T-cell (primary cell): ENCODE measurements at regions of chr11 and their contacts with region 1.

Region 1: DNA sequence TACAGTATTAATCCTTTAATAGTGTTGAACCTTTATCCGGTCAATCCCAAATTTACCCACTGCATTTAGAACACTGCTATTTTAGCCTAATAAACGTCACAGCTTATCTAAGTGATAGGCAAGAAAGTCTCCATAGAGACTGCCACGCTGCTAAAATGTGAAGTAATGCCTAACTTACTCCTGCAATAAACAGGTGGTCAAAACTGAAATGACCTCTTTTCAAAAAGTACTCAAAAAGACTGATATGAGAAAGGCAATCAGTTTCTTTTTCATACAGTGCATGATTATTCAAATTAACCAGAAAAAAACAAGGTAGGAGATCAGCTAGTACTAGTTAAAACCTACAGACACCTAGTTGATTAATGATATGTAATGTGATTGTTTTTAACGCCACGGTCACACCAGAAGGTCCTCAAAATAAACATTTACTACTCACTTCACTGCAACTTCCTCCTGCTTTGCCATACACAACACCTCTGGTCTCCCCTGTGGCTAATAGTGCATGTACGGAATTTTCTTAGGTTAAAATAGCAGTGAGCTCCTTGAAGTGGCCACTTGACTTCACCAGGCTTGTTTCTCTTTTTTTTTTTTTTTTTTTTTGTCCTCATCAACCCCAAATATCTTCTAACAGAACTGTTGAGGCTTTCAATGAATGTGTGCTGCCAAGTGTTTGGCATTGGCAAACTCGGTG is 8.8 kb downstream of the ATP5MG start:
- DNase-seq: no peak
- ATAC-seq: no peak
- H3K4me3 ChIP-seq: no peak overlapping the region
- H3K4me3 Mint-ChIP-seq: no peak overlapping the region
- H3K27ac ChIP-seq: no peak overlapping the region
- H3K27ac Mint-ChIP-seq: peak overlapping the region in 1 of 2 donors; percentile 44
- H3K4me1 ChIP-seq: peaks cover 0 to 3% of the 10 kb centered on the region in 2 experiments
- H3K4me1 Mint-ChIP-seq: peaks cover 22 to 34% (median 30%) of the 10 kb centered on the region in 3 donors
- H3K27me3 ChIP-seq: no peaks in the 10 kb centered on the region
- H3K27me3 Mint-ChIP-seq: no peaks in the 10 kb centered on the region

Region 2: GRCh38 chr11:118304568-118305248 is 105.5 kb before region 1 on chr11 and contains the start of gene CD3E:
- CTCF ChIA-PET with region 1: no interaction called
- POLR2A ChIA-PET with region 1: no interaction called
- DNase-seq: peak; percentile 46 to 80 (median 61)
- ATAC-seq: peak; percentile 77 to 85 (median 80)
- H3K4me3 ChIP-seq: peak within 1 kb of the TSS; percentile 87 to 91
- H3K4me3 Mint-ChIP-seq: peak within 1 kb of the TSS; percentile 95 to 99 (median 99)
- H3K27ac ChIP-seq: peak within 1 kb of the TSS; percentile 91
- H3K27ac Mint-ChIP-seq: peak within 1 kb of the TSS; percentile 100
- H3K4me1 ChIP-seq: peaks cover 39 to 59% of the 10 kb centered on the region in 2 experiments
- H3K4me1 Mint-ChIP-seq: peaks cover 75 to 91% (median 84%) of the 10 kb centered on the region in 3 donors
- H3K27me3 ChIP-seq: no peaks in the 10 kb centered on the region
- H3K27me3 Mint-ChIP-seq: no peaks in the 10 kb centered on the region
- total RNA-seq, gene CD3E: 555 to 659 (median 596) TPM

Region 3: DNA sequence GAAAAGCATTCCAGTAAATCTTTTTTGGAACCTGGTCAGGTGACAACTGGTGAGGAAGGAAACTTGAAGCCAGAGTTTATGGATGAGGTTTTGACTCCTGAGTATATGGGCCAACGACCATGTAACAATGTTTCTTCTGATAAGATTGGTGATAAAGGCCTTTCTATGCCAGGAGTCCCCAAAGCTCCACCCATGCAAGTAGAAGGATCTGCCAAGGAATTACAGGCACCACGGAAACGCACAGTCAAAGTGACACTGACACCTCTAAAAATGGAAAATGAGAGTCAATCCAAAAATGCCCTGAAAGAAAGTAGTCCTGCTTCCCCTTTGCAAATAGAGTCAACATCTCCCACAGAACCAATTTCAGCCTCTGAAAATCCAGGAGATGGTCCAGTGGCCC is 93.0 kb after region 1 on chr11:
- CTCF ChIA-PET with region 1: interaction called in 1 of 2 experiments, 3 read pairs
- POLR2A ChIA-PET with region 1: interaction called in 1 of 2 experiments, 11 read pairs
- DNase-seq: no peak
- ATAC-seq: no peak
- H3K4me3 ChIP-seq: no peak overlapping the region
- H3K4me3 Mint-ChIP-seq: no peak overlapping the region
- H3K27ac ChIP-seq: no peak overlapping the region
- H3K27ac Mint-ChIP-seq: peak overlapping the region in 1 of 2 donors; percentile 16
- H3K4me1 ChIP-seq: no peaks in the 10 kb centered on the region
- H3K4me1 Mint-ChIP-seq: peaks cover 0 to 2% (median 0%) of the 10 kb centered on the region in 3 donors
- H3K27me3 ChIP-seq: no peaks in the 10 kb centered on the region
- H3K27me3 Mint-ChIP-seq: no peaks in the 10 kb centered on the region